Naive thymus-derived CD4-positive, alpha-beta T cell (primary cell): ENCODE measurements at regions of chr3 and their contacts with region 1.

Region 1: DNA sequence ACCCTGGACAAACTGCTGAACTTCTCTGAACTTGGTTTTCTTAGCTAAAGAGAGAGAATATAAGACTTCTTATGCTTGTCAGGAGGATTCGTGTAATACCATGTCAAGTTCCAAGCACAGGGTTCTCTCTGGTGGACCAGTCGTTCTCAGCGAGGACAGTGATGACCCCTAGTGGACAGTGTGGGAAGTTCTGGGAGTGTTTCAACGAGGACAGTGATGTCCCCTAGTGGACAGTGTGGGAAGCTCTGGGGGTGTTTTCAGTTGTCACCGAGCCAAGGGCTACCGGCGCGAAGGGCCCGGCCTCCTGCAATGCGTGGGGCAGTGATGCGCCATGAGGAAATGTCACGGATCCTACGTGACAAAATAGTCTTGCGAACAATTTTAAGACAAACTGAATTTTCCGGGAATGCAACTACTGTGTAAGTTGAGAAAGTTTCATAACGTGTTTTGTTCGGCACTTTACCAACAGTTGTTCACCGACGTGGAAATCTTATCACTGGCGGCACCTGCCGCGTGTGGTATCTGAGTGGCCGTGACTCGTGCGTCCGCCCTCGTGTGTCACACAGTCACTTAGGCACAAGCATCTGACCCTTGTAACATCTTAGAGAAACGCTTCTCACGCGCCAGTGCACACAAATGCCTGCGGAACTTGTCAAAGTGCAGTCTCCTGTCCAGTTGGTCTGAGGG is 39.3 kb upstream of the MUC4 start:
- DNase-seq: peak; percentile 62 to 92 (median 86)
- ATAC-seq: peak; percentile 100
- H3K4me3 ChIP-seq: no peak overlapping the region
- H3K4me3 Mint-ChIP-seq: peak overlapping the region in 9 of 10 donors; percentile 31 to 76 (median 55)
- H3K27ac ChIP-seq: no peak overlapping the region
- H3K27ac Mint-ChIP-seq: peak overlapping the region in 3 of 9 donors; percentile 17 to 40 (median 20)
- H3K4me1 ChIP-seq: no peaks in the 10 kb centered on the region
- H3K4me1 Mint-ChIP-seq: peaks cover 2 to 24% (median 6%) of the 10 kb centered on the region in 7 donors
- H3K27me3 ChIP-seq: no peaks in the 10 kb centered on the region
- H3K27me3 Mint-ChIP-seq: peaks cover 0 to 3% (median 0%) of the 10 kb centered on the region in 5 donors

Region 2: GRCh38 chr3:194682694-194683310 is 1168.2 kb before region 1 on chr3:
- CTCF ChIA-PET with region 1: no interaction called
- POLR2A ChIA-PET with region 1: no interaction called
- intact Hi-C with region 1: loop called in 1 of 2 experiments (anchors 2 kb)
- DNase-seq: peak; percentile 33 to 75 (median 60)
- ATAC-seq: peak; percentile 77
- H3K4me3 ChIP-seq: no peak overlapping the region
- H3K4me3 Mint-ChIP-seq: peak overlapping the region in 2 of 10 donors; percentile 12 to 25
- H3K27ac ChIP-seq: no peak overlapping the region
- H3K27ac Mint-ChIP-seq: peak overlapping the region in 1 of 9 donors; percentile 25
- H3K4me1 ChIP-seq: peaks cover 12 to 14% of the 10 kb centered on the region in 2 donors
- H3K4me1 Mint-ChIP-seq: peaks cover 10 to 41% (median 28%) of the 10 kb centered on the region in 7 donors
- H3K27me3 ChIP-seq: no peaks in the 10 kb centered on the region
- H3K27me3 Mint-ChIP-seq: peaks cover 0 to 37% (median 0%) of the 10 kb centered on the region in 5 donors

Region 3: DNA sequence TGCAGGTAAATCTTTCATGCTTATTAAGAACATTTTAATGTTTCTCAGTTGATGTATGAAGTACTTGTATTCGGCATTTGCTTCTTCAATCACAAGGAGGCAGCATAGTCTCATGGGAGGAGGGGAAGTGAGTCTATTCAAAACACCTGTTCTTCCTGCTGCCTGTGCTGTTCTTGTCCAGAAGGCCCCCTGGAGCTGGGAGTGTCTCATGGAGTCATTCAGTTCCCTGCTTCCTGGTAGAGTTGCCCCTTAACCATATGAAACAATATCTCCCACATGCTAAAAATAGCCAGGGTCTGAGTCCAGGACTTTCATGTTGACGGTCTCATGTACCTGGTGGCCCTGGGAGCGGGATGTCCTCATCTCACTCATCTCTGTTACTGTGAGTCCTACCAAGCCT is 292.4 kb before region 1 on chr3:
- CTCF ChIA-PET with region 1: interaction called, 16 read pairs
- POLR2A ChIA-PET with region 1: no interaction called
- intact Hi-C with region 1: loop called (anchors 1 kb)
- DNase-seq: peak in 7 of 9 donors; percentile 56 to 75 (median 67)
- ATAC-seq: peak; percentile 72
- H3K4me3 ChIP-seq: no peak overlapping the region
- H3K4me3 Mint-ChIP-seq: peak overlapping the region in 1 of 10 donors; percentile 33
- H3K27ac ChIP-seq: no peak overlapping the region
- H3K27ac Mint-ChIP-seq: peak overlapping the region in 8 of 9 donors; percentile 46 to 83 (median 68)
- H3K4me1 ChIP-seq: peaks cover 0 to 37% of the 10 kb centered on the region in 2 donors
- H3K4me1 Mint-ChIP-seq: peaks cover 20 to 45% (median 38%) of the 10 kb centered on the region in 7 donors
- H3K27me3 ChIP-seq: no peaks in the 10 kb centered on the region
- H3K27me3 Mint-ChIP-seq: no peaks in the 10 kb centered on the region

Region 4: GRCh38 chr3:195739561-195740111 is 111.4 kb before region 1 on chr3:
- CTCF ChIA-PET with region 1: no interaction called
- POLR2A ChIA-PET with region 1: no interaction called
- intact Hi-C with region 1: loop called in 1 of 2 experiments (anchors 5 kb)
- DNase-seq: no peak
- ATAC-seq: no peak
- H3K4me3 ChIP-seq: no peak overlapping the region
- H3K4me3 Mint-ChIP-seq: no peak overlapping the region
- H3K27ac ChIP-seq: no peak overlapping the region
- H3K27ac Mint-ChIP-seq: no peak overlapping the region
- H3K4me1 ChIP-seq: no peaks in the 10 kb centered on the region
- H3K4me1 Mint-ChIP-seq: no peaks in the 10 kb centered on the region
- H3K27me3 ChIP-seq: no peaks in the 10 kb centered on the region
- H3K27me3 Mint-ChIP-seq: peaks cover 0 to 12% (median 0%) of the 10 kb centered on the region in 5 donors

Region 5: DNA sequence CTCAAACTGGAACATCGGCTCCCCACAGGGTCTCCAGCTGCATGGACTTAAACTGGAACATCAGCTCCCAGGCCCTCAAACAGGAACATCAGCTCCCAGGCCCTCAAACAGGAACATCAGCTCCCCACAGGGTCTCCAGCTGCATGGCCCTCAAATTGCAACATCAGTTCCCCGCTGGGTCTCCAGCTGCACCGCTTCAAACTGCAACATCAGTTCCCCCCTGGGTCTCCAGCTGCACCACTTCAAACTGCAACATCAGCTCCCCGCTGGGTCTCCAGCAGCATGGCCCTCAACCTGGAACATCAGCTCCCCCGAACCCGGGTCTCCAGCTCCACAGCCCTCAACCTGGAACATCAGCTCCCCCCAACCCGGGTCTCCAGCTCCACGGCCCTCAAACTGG is 148.9 kb after region 1 on chr3:
- CTCF ChIA-PET with region 1: no interaction called
- POLR2A ChIA-PET with region 1: no interaction called
- intact Hi-C with region 1: loop called in 1 of 2 experiments (anchors 10 kb)
- DNase-seq: no peak
- ATAC-seq: no peak
- H3K4me3 ChIP-seq: no peak overlapping the region
- H3K4me3 Mint-ChIP-seq: no peak overlapping the region
- H3K27ac ChIP-seq: no peak overlapping the region
- H3K27ac Mint-ChIP-seq: no peak overlapping the region
- H3K4me1 ChIP-seq: no peaks in the 10 kb centered on the region
- H3K4me1 Mint-ChIP-seq: no peaks in the 10 kb centered on the region
- H3K27me3 ChIP-seq: no peaks in the 10 kb centered on the region
- H3K27me3 Mint-ChIP-seq: peaks cover 0 to 34% (median 15%) of the 10 kb centered on the region in 5 donors

Region 6: DNA sequence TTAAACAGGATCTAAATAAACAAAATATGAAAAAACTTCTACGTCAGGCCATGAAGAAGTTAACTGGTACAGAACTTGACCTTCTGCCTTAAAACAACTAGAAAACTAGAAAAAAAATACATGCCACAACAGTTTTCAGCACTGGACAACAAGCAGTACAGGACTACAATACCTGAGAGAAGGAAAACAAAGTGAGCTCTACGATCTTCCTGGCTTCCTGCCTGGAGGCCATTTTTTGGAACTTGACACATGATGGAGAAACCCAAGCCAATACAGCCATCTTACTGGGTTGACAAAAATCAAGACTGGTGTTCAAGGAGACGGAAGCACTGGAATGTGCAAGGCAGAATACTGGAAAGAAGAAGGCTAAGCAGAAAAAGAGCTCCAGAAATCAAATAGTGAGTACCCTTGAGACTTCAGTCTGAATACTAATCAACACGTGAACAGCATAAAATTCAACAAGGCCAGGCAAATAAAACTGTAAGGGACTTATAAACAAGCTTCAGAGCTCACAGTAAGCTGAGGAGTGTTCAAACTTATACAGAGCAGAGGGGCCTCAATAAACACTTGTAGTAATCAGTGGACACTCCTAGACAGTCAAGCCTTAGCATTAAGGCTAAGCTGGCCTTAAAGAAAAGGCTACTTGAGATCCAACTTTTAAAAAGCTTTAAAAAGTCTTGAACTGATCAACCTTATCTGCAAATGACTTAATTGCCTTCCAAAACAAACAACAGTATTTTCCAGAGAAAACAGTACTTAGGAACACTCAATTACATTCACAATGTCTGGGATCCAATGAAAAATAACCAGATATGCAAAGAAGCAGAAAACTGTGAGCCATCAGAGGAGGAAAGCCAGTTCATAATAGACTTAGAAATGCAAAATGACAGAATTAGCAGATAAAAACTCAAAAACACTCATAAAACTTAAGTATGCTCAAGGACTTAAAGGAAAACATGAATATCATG is 1384.2 kb after region 1 on chr3:
- CTCF ChIA-PET with region 1: no interaction called
- POLR2A ChIA-PET with region 1: no interaction called
- intact Hi-C with region 1: no loop called
- DNase-seq: no peak
- ATAC-seq: no peak
- H3K4me3 ChIP-seq: no peak overlapping the region
- H3K4me3 Mint-ChIP-seq: peak overlapping the region in 2 of 10 donors; percentile 4 to 8
- H3K27ac ChIP-seq: no peak overlapping the region
- H3K27ac Mint-ChIP-seq: peak overlapping the region in 1 of 9 donors; percentile 32
- H3K4me1 ChIP-seq: no peaks in the 10 kb centered on the region
- H3K4me1 Mint-ChIP-seq: peaks cover 24 to 80% (median 64%) of the 10 kb centered on the region in 7 donors
- H3K27me3 ChIP-seq: no peaks in the 10 kb centered on the region
- H3K27me3 Mint-ChIP-seq: no peaks in the 10 kb centered on the region